CD14-positive monocyte (primary cell): ENCODE measurements at regions of chr13 and their contacts with region 1.

Region 1: GRCh38 chr13:42110410-42111155 is 62.1 kb downstream of the DGKH start:
- DNase-seq: peak; percentile 52 to 70 (median 61)
- H3K4me3 ChIP-seq: no peak overlapping the region
- H3K4me3 Mint-ChIP-seq: no peak overlapping the region
- H3K27ac ChIP-seq: no peak overlapping the region
- H3K27ac Mint-ChIP-seq: peak overlapping the region in 1 of 7 donors; percentile 27
- H3K4me1 ChIP-seq: no peaks in the 10 kb centered on the region
- H3K4me1 Mint-ChIP-seq: peaks cover 4% of the 10 kb centered on the region
- H3K27me3 ChIP-seq: no peaks in the 10 kb centered on the region
- H3K27me3 Mint-ChIP-seq: peaks cover 0 to 1% (median 0%) of the 10 kb centered on the region in 3 donors
- CTCF ChIP-seq: peak; percentile 75

Region 2: DNA sequence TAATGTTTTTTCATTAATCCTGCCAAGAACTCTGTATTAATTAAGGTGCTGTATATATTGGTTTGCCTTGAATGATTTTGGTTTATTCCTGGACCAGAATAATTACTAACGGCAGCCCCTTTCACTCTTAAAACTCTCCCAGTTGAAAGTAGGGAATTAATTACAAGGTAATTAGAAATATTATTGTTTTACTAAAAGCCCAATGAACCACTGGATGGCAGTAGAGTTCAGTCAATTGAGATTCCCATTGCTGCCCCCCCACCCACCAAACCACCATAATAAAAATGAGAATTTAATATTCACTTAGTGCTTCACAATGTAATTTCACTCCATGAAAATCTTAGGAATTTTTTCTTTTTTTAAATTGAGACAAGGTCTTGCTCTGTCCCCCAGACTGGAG is 1035.5 kb before region 1 on chr13:
- intact Hi-C with region 1: loop called in 1 of 2 experiments (anchors 10 kb)
- DNase-seq: peak in 2 of 3 donors; percentile 33 to 39
- H3K4me3 ChIP-seq: no peak overlapping the region
- H3K4me3 Mint-ChIP-seq: no peak overlapping the region
- H3K27ac ChIP-seq: no peak overlapping the region
- H3K27ac Mint-ChIP-seq: no peak overlapping the region
- H3K4me1 ChIP-seq: no peaks in the 10 kb centered on the region
- H3K4me1 Mint-ChIP-seq: no peaks in the 10 kb centered on the region
- H3K27me3 ChIP-seq: no peaks in the 10 kb centered on the region
- H3K27me3 Mint-ChIP-seq: peaks cover 0 to 1% (median 0%) of the 10 kb centered on the region in 3 donors
- CTCF ChIP-seq: peak; percentile 69

Region 3: GRCh38 chr13:41352935-41353840 is 757.4 kb before region 1 on chr13:
- intact Hi-C with region 1: loop called (anchors 5 to 10 kb)
- DNase-seq: peak; percentile 37 to 60 (median 37)
- H3K4me3 ChIP-seq: no peak overlapping the region
- H3K4me3 Mint-ChIP-seq: no peak overlapping the region
- H3K27ac ChIP-seq: peak overlapping the region in 1 of 2 donors; percentile 45
- H3K27ac Mint-ChIP-seq: peak overlapping the region in 3 of 7 donors; percentile 33 to 74 (median 46)
- H3K4me1 ChIP-seq: peaks cover 18 to 25% of the 10 kb centered on the region in 2 donors
- H3K4me1 Mint-ChIP-seq: peaks cover 27% of the 10 kb centered on the region
- H3K27me3 ChIP-seq: no peaks in the 10 kb centered on the region
- H3K27me3 Mint-ChIP-seq: no peaks in the 10 kb centered on the region
- CTCF ChIP-seq: peak; percentile 85

Region 4: DNA sequence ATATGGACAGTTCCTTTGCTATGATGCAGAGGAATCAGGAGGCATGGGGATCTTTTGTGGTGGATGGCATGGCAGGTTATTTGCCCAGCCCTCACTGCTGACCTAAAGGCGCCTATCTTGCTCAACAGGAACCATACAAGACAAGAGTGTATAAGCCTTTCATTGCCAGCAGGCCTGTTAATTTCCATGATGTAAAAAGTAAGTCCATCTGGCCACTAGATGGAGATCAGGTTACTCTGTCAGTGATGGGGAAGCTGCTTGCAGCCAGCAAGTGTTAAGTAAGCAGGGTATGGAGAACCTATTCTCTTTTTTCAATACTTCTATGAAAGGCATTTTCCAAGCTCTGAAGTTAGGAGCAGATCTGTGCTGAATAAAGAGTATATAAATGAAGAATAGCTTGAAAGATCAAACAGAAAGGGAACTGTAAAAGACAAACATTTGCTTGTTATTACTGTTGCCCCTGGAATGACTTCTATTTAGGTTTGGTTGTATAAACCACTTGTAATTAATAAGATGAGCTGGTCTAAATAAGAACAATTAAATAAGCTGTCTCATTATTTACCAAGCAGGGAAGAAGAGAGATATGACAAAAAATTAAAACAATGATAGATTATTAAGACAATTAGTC is 442.3 kb before region 1 on chr13:
- intact Hi-C with region 1: loop called (anchors 5 kb)
- DNase-seq: peak; percentile 71 to 82 (median 81)
- H3K4me3 ChIP-seq: no peak overlapping the region
- H3K4me3 Mint-ChIP-seq: no peak overlapping the region
- H3K27ac ChIP-seq: no peak overlapping the region
- H3K27ac Mint-ChIP-seq: peak overlapping the region in 1 of 7 donors; percentile 47
- H3K4me1 ChIP-seq: no peaks in the 10 kb centered on the region
- H3K4me1 Mint-ChIP-seq: no peaks in the 10 kb centered on the region
- H3K27me3 ChIP-seq: no peaks in the 10 kb centered on the region
- H3K27me3 Mint-ChIP-seq: no peaks in the 10 kb centered on the region
- CTCF ChIP-seq: peak; percentile 82